ENCODE measurements at regions of chr11 and their contacts with region 1.

Region 1: DNA sequence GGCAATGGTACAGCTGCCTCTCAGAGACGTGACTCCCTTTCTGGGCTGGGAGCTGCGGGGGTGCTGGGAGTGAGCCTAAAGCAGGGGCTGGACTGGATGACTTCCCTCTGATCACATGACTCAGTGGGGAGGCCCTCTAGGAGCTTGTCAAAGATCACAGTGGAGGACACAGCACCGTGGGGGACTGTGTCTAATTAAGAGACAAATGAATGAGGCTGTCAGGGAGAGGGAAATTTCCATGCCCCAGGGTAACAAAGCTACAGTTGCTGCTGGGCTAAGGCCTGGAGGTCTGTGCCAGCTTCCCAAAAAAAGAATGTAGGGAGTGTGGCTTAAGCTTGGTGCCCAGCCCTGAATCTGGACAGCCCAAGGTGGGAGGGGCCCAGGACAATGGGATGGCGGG is 262.8 kb upstream of the PLET1 start:
- DNase-seq: peak in 2 of 3 donors; percentile 33 to 57
- H3K4me3 ChIP-seq: no peak overlapping the region
- H3K27ac ChIP-seq: no peak overlapping the region
- H3K4me1 ChIP-seq: peaks cover 0 to 36% (median 6%) of the 10 kb centered on the region in 4 experiments
- H3K27me3 ChIP-seq: peaks cover 0 to 2% (median 0%) of the 10 kb centered on the region in 5 experiments

Region 2: GRCh38 chr11:112226062-112226830 is 297.2 kb before region 1 on chr11 and contains the start of gene PTS:
- CTCF ChIA-PET with region 1: no interaction called
- POLR2A ChIA-PET with region 1: interaction called, 11 read pairs
- DNase-seq: peak; percentile 82 to 85 (median 85)
- H3K4me3 ChIP-seq: peak within 1 kb of the TSS; percentile 72 to 97 (median 84)
- H3K27ac ChIP-seq: peak within 1 kb of the TSS; percentile 92 to 98
- H3K4me1 ChIP-seq: peaks cover 5 to 18% (median 12%) of the 10 kb centered on the region in 4 experiments
- H3K27me3 ChIP-seq: no peaks in the 10 kb centered on the region

Region 3: DNA sequence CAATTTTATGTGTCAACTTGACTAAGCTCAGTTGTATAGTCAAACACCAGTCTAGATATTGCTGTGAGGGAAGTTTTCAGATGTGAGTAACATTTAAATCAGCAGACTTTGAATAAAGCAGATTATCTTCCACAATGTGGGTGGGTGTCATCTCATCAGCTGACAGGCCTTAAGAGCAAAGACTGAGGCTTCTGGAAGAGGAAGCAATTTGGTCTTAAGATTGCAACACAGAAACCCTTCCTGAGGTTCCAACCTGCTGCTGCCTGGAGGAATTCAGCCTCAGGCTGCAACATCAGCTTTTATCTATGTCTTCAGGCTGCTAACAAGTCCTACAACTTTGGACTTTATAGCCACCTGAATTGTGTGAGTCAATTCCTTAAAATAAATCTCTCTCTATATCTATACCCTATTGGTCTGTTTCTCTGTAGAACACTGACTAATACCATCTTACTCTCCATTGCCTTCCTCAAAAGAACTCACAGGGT is 14.4 kb after region 1 on chr11:
- CTCF ChIA-PET with region 1: interaction called, 10 read pairs
- POLR2A ChIA-PET with region 1: interaction called, 3 read pairs
- DNase-seq: peak in 2 of 3 donors; percentile 33 to 44
- H3K4me3 ChIP-seq: no peak overlapping the region
- H3K27ac ChIP-seq: no peak overlapping the region
- H3K4me1 ChIP-seq: no peaks in the 10 kb centered on the region
- H3K27me3 ChIP-seq: peaks cover 0 to 10% (median 2%) of the 10 kb centered on the region in 5 experiments